Caco-2 (cell line): ENCODE measurements at regions of chr4 and their contacts with region 1.

Region 1: GRCh38 chr4:16001484-16001858 is 38.5 kb upstream of the FGFBP2 start:
- DNase-seq: peak; percentile 56 to 64
- H3K4me3 ChIP-seq: no peak overlapping the region
- H3K4me3 Mint-ChIP-seq: no peak overlapping the region
- H3K27ac Mint-ChIP-seq: no peak overlapping the region
- H3K4me1 ChIP-seq: no peaks in the 10 kb centered on the region
- H3K4me1 Mint-ChIP-seq: no peaks in the 10 kb centered on the region
- H3K27me3 ChIP-seq: no peaks in the 10 kb centered on the region
- H3K27me3 Mint-ChIP-seq: no peaks in the 10 kb centered on the region
- CTCF ChIP-seq: peak; percentile 58 to 74

Region 2: DNA sequence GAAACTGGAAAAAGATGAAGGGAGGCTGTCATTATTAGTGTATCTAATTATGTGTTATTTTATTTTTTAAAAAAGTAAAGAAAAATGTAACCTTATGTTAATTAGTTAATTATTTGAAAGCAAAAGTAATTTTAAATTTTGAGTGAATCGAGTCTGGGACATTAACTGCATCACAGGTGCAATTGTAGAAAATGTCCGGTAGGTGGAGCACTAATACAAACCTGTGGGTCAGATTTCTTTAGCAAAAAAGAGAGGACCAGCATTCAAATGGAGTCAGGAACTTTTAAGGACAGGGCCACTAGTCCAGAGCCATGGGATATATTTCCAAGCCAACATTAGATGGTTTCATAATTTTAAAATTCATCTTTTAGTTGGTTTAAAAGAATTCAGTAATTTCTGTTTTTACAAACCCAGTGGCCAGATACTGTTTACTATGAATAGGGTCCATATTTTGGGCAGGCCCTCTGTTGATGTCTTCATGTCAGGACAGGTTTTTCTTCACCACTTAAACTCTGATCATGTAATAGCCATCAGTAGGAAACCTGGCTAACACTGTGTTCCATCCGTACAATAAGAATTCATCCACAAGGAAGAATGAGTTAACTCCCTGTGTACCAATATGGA is 271.4 kb before region 1 on chr4:
- CTCF ChIA-PET with region 1: no interaction called
- POLR2A ChIA-PET with region 1: no interaction called
- intact Hi-C with region 1: loop called (anchors 5 kb)
- DNase-seq: peak in 1 of 2 experiments; percentile 38
- H3K4me3 ChIP-seq: no peak overlapping the region
- H3K4me3 Mint-ChIP-seq: no peak overlapping the region
- H3K27ac Mint-ChIP-seq: no peak overlapping the region
- H3K4me1 ChIP-seq: no peaks in the 10 kb centered on the region
- H3K4me1 Mint-ChIP-seq: no peaks in the 10 kb centered on the region
- H3K27me3 ChIP-seq: no peaks in the 10 kb centered on the region
- H3K27me3 Mint-ChIP-seq: peaks cover 3% of the 10 kb centered on the region
- CTCF ChIP-seq: peak; percentile 66 to 67

Region 3: GRCh38 chr4:15805583-15806517 is 195.6 kb before region 1 on chr4:
- CTCF ChIA-PET with region 1: interaction called, 11 read pairs
- POLR2A ChIA-PET with region 1: no interaction called
- intact Hi-C with region 1: loop called (anchors 1 kb)
- DNase-seq: peak in 1 of 2 experiments; percentile 52
- H3K4me3 ChIP-seq: no peak overlapping the region
- H3K4me3 Mint-ChIP-seq: no peak overlapping the region
- H3K27ac Mint-ChIP-seq: no peak overlapping the region
- H3K4me1 ChIP-seq: no peaks in the 10 kb centered on the region
- H3K4me1 Mint-ChIP-seq: peaks cover 9% of the 10 kb centered on the region
- H3K27me3 ChIP-seq: no peaks in the 10 kb centered on the region
- H3K27me3 Mint-ChIP-seq: peaks cover 5% of the 10 kb centered on the region
- CTCF ChIP-seq: peak; percentile 65 to 72

Region 4: DNA sequence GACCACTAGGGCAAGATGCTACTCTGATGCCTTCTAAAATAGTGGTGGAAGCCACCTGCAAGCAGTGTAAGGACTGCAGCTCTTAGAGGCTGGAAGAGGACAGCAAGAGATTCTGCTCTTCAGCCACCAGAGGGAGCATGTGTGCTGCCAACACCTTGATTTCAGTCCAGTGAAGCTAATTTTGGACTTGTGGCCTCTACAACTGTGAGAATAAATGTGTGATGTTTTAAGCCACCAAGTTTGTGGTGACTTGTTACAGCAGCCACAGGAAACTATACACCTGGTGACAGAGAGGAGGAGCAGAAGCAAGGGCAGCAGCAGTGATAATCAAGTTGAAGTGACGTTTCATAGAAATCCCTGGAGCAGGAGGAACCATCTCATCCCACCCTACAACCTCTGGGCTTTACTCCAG is 118.8 kb before region 1 on chr4:
- CTCF ChIA-PET with region 1: interaction called, 4 read pairs
- POLR2A ChIA-PET with region 1: no interaction called
- intact Hi-C with region 1: loop called (anchors 1 kb)
- DNase-seq: peak; percentile 53 to 71
- H3K4me3 ChIP-seq: no peak overlapping the region
- H3K4me3 Mint-ChIP-seq: no peak overlapping the region
- H3K27ac Mint-ChIP-seq: no peak overlapping the region
- H3K4me1 ChIP-seq: no peaks in the 10 kb centered on the region
- H3K4me1 Mint-ChIP-seq: no peaks in the 10 kb centered on the region
- H3K27me3 ChIP-seq: no peaks in the 10 kb centered on the region
- H3K27me3 Mint-ChIP-seq: peaks cover 2% of the 10 kb centered on the region
- CTCF ChIP-seq: peak; percentile 85 to 88

Region 5: GRCh38 chr4:15963001-15963451 is 38.4 kb before region 1 on chr4 and contains the start of gene FGFBP2:
- CTCF ChIA-PET with region 1: interaction called, 6 read pairs
- POLR2A ChIA-PET with region 1: no interaction called
- intact Hi-C with region 1: loop called (anchors 1 kb)
- DNase-seq: peak; percentile 56 to 59
- H3K4me3 ChIP-seq: no peak within 1 kb of the TSS
- H3K4me3 Mint-ChIP-seq: no peak within 1 kb of the TSS
- H3K27ac Mint-ChIP-seq: no peak within 1 kb of the TSS
- H3K4me1 ChIP-seq: no peaks in the 10 kb centered on the region
- H3K4me1 Mint-ChIP-seq: no peaks in the 10 kb centered on the region
- H3K27me3 ChIP-seq: no peaks in the 10 kb centered on the region
- H3K27me3 Mint-ChIP-seq: no peaks in the 10 kb centered on the region
- CTCF ChIP-seq: peak; percentile 55 to 57
- total RNA-seq, gene FGFBP2: 0.25 TPM in 1 of 2 replicates, not detected in the other

Region 6: GRCh38 chr4:16297003-16297402 is 295.5 kb after region 1 on chr4:
- CTCF ChIA-PET with region 1: no interaction called
- POLR2A ChIA-PET with region 1: no interaction called
- intact Hi-C with region 1: no loop called
- DNase-seq: no peak
- H3K4me3 ChIP-seq: no peak overlapping the region
- H3K4me3 Mint-ChIP-seq: no peak overlapping the region
- H3K27ac Mint-ChIP-seq: no peak overlapping the region
- H3K4me1 ChIP-seq: no peaks in the 10 kb centered on the region
- H3K4me1 Mint-ChIP-seq: no peaks in the 10 kb centered on the region
- H3K27me3 ChIP-seq: no peaks in the 10 kb centered on the region
- H3K27me3 Mint-ChIP-seq: peaks cover 9% of the 10 kb centered on the region
- CTCF ChIP-seq: no peak